Natural killer cell (primary cell): ENCODE measurements at regions of chr5 and their contacts with region 1.

Region 1: GRCh38 chr5:103119765-103120606 is at the starts of genes GIN1 and PPIP5K2:
- DNase-seq: peak; percentile 95 to 99
- ATAC-seq: peak; percentile 91 to 99 (median 92)
- H3K4me3 ChIP-seq: peak within 1 kb of the TSS; percentile 88
- H3K4me3 Mint-ChIP-seq: peak within 1 kb of the TSS; percentile 97
- H3K27ac ChIP-seq: peak within 1 kb of the TSS; percentile 96
- H3K27ac Mint-ChIP-seq: peak within 1 kb of the TSS; percentile 99
- H3K4me1 ChIP-seq: peaks cover 6% of the 10 kb centered on the region
- H3K4me1 Mint-ChIP-seq: peaks cover 53 to 54% of the 10 kb centered on the region in 2 donors
- H3K27me3 ChIP-seq: no peaks in the 10 kb centered on the region
- H3K27me3 Mint-ChIP-seq: no peaks in the 10 kb centered on the region
- CTCF ChIP-seq: no peak
- total RNA-seq, gene GIN1: 3.3 to 3.6 (median 3.4) TPM
- total RNA-seq, gene PPIP5K2: 71.4 to 85.3 (median 72.8) TPM

Region 2: DNA sequence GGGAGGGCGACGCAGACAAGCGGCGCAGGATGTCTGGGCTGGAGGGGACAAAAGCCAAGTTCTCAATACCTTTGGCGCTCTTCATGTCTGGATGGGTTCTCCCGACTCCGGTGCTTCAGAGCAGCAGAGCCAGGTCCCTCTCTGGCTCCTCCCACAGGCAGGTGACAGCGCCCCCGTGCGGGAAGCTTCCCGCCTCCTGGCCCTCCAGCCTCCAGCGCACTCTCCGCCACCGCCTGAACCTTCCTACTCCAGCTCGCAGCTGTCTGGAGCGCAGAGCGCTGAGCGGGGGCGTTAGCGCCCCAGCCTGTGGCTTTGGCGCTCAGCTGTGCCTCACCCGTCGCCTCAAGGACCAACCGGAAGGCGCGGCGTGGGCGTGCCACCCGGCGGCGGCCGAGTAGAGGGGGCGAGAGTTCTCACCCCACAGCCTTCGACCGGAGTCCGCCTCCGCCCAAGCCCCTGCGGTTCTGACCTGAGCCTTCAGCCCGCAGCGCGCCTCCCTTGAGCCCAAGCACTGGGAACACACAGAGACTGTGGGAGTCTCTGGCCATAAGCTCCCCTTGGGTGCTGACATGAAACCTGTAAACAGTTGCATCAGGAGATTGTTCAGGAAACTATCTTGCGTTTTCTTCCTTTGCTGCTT is 823.7 kb before region 1 on chr5 and contains the start of gene SLCO4C1:
- intact Hi-C with region 1: loop called (anchors 5 kb)
- DNase-seq: peak; percentile 70 to 86
- ATAC-seq: peak; percentile 89 to 95 (median 90)
- H3K4me3 ChIP-seq: peak within 1 kb of the TSS; percentile 66
- H3K4me3 Mint-ChIP-seq: peak within 1 kb of the TSS; percentile 97
- H3K27ac ChIP-seq: peak within 1 kb of the TSS; percentile 77
- H3K27ac Mint-ChIP-seq: peak within 1 kb of the TSS; percentile 85 to 95
- H3K4me1 ChIP-seq: peaks cover 22% of the 10 kb centered on the region
- H3K4me1 Mint-ChIP-seq: peaks cover 37 to 41% of the 10 kb centered on the region in 2 donors
- H3K27me3 ChIP-seq: no peaks in the 10 kb centered on the region
- H3K27me3 Mint-ChIP-seq: no peaks in the 10 kb centered on the region
- CTCF ChIP-seq: peak; percentile 37
- total RNA-seq, gene SLCO4C1: 30.9 to 44.7 (median 31.2) TPM

Region 3: GRCh38 chr5:102778478-102778877 is 341.5 kb before region 1 on chr5:
- intact Hi-C with region 1: loop called (anchors 5 kb)
- DNase-seq: no peak
- ATAC-seq: no peak
- H3K4me3 ChIP-seq: no peak overlapping the region
- H3K4me3 Mint-ChIP-seq: no peak overlapping the region
- H3K27ac ChIP-seq: no peak overlapping the region
- H3K27ac Mint-ChIP-seq: peak overlapping the region in 1 of 2 donors; percentile 23
- H3K4me1 ChIP-seq: peaks cover under 1% of the 10 kb centered on the region
- H3K4me1 Mint-ChIP-seq: peaks cover 36 to 56% of the 10 kb centered on the region in 2 donors
- H3K27me3 ChIP-seq: no peaks in the 10 kb centered on the region
- H3K27me3 Mint-ChIP-seq: no peaks in the 10 kb centered on the region
- CTCF ChIP-seq: no peak

Region 4: DNA sequence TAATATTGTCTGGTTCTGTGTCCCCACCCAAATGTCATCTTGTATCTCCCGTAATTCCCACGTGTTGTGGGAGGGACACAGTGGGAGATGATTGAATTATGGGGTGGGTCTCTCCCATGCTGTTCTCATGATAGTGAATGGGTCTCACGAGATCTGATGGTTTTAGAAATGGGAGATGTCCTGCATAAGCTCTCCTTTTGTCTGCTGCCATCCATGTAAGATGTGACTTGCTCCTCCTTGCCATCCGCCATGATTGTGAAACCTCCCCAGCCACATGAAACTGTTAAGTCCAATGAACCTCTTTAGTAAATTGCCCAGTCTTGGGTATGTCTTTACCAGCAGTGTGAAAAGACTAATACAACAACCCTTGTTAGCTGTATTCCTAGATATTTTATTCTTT is 44.5 kb before region 1 on chr5:
- intact Hi-C with region 1: no loop called
- DNase-seq: no peak
- ATAC-seq: no peak
- H3K4me3 ChIP-seq: no peak overlapping the region
- H3K4me3 Mint-ChIP-seq: no peak overlapping the region
- H3K27ac ChIP-seq: no peak overlapping the region
- H3K27ac Mint-ChIP-seq: no peak overlapping the region
- H3K4me1 ChIP-seq: no peaks in the 10 kb centered on the region
- H3K4me1 Mint-ChIP-seq: no peaks in the 10 kb centered on the region
- H3K27me3 ChIP-seq: no peaks in the 10 kb centered on the region
- H3K27me3 Mint-ChIP-seq: no peaks in the 10 kb centered on the region
- CTCF ChIP-seq: no peak

Region 5: DNA sequence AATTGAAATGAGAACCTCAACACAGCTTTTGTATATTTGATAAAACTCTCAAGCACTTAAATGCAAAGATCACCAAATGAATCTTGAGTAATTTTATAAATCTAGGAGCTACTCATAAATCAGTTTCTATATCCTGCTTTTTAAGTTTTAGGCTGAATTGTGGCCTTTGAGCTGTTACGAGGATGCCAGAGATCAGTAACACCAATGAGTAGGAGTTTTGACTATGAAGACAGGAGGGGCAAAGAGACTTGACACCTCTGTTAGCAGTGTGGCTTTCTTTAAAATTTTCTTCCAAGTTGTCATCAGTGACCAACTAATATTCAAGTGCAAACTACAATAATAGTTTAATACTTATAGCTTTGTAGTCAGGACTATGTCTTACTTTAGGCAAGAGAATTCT is 12.7 kb after region 1 on chr5:
- intact Hi-C with region 1: no loop called
- DNase-seq: no peak
- ATAC-seq: peak in 1 of 3 donors; percentile 39
- H3K4me3 ChIP-seq: no peak overlapping the region
- H3K4me3 Mint-ChIP-seq: no peak overlapping the region
- H3K27ac ChIP-seq: no peak overlapping the region
- H3K27ac Mint-ChIP-seq: peak overlapping the region; percentile 20 to 37
- H3K4me1 ChIP-seq: no peaks in the 10 kb centered on the region
- H3K4me1 Mint-ChIP-seq: peaks cover 14% of the 10 kb centered on the region in 2 donors
- H3K27me3 ChIP-seq: no peaks in the 10 kb centered on the region
- H3K27me3 Mint-ChIP-seq: no peaks in the 10 kb centered on the region
- CTCF ChIP-seq: no peak

Region 6: DNA sequence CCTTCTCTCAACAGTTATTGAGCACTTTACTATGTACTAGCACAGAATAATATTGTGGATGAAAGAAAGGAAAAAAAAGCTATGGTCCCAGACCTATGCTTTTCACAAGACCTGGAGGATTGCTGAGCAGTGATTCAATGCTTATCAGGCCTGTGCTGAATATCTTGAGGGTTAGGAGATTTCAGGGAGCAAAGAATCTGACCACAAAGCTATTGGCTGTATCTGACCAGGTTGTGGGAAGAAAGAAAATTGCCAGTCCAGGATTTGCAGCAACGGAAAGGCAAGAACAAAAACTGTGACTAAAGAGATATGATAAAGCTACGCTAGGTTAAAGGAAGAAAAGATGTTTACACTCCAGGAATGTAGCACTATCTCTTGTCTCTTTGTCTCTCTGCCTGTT is 123.7 kb after region 1 on chr5:
- intact Hi-C with region 1: no loop called
- DNase-seq: no peak
- ATAC-seq: no peak
- H3K4me3 ChIP-seq: no peak overlapping the region
- H3K4me3 Mint-ChIP-seq: no peak overlapping the region
- H3K27ac ChIP-seq: no peak overlapping the region
- H3K27ac Mint-ChIP-seq: no peak overlapping the region
- H3K4me1 ChIP-seq: no peaks in the 10 kb centered on the region
- H3K4me1 Mint-ChIP-seq: peaks cover 7 to 8% of the 10 kb centered on the region in 2 donors
- H3K27me3 ChIP-seq: peaks cover 10% of the 10 kb centered on the region
- H3K27me3 Mint-ChIP-seq: peaks cover 20 to 43% of the 10 kb centered on the region in 2 donors
- CTCF ChIP-seq: no peak

Region 7: GRCh38 chr5:103258368-103258956 is 138.5 kb after region 1 on chr5 and contains the start of gene MACIR:
- intact Hi-C with region 1: loop called (anchors 1 kb)
- DNase-seq: peak; percentile 86 to 97
- ATAC-seq: peak; percentile 94 to 98 (median 94)
- H3K4me3 ChIP-seq: peak within 1 kb of the TSS; percentile 67
- H3K4me3 Mint-ChIP-seq: peak within 1 kb of the TSS; percentile 93
- H3K27ac ChIP-seq: peak within 1 kb of the TSS; percentile 49
- H3K27ac Mint-ChIP-seq: peak within 1 kb of the TSS; percentile 62 to 79
- H3K4me1 ChIP-seq: peaks cover 5% of the 10 kb centered on the region
- H3K4me1 Mint-ChIP-seq: peaks cover 10 to 16% of the 10 kb centered on the region in 2 donors
- H3K27me3 ChIP-seq: peaks cover 3% of the 10 kb centered on the region
- H3K27me3 Mint-ChIP-seq: peaks cover 7% of the 10 kb centered on the region in 2 donors
- CTCF ChIP-seq: no peak
- total RNA-seq, gene MACIR: 1.5 to 5.3 (median 2.7) TPM

Region 8: DNA sequence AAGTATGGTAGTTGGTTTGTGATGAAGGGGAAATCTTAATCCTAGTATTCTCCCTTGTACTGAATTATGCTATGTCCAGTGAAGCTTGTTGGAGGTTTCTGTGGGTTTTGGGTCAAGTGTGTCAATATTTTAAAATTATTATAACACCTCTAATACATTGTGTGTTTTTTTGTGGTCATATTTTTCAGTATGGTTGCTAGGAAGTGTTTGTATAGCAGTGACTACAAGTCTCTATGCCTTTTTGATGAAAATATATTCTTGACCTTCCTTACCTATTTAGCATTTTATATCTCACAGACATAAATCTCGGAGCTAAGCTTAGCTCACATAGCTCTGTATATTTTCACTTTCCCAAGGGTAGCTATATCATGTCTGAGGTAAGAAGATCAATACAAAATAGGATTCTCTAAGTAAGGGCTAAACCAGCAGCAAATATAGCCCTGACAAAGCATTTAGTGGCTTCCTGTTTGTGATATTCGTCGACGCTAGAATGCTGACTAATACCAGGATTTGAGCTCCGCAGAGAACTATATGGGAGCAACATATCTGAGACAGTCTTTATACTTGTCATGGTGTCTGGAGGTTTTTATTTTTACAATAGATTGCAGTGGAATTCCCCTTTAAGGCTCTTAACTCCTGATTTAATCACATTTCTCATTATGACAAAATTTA is 220.9 kb after region 1 on chr5:
- intact Hi-C with region 1: no loop called
- DNase-seq: no peak
- ATAC-seq: no peak
- H3K4me3 ChIP-seq: no peak overlapping the region
- H3K4me3 Mint-ChIP-seq: no peak overlapping the region
- H3K27ac ChIP-seq: no peak overlapping the region
- H3K27ac Mint-ChIP-seq: no peak overlapping the region
- H3K4me1 ChIP-seq: no peaks in the 10 kb centered on the region
- H3K4me1 Mint-ChIP-seq: no peaks in the 10 kb centered on the region
- H3K27me3 ChIP-seq: no peaks in the 10 kb centered on the region
- H3K27me3 Mint-ChIP-seq: no peaks in the 10 kb centered on the region
- CTCF ChIP-seq: no peak